Activated CD4-positive, alpha-beta T cell treated with anti-CD3 and anti-CD28 coated beads for 36 hours (primary cell): ENCODE measurements at regions of chr7 and their contacts with region 1.

Region 1: DNA sequence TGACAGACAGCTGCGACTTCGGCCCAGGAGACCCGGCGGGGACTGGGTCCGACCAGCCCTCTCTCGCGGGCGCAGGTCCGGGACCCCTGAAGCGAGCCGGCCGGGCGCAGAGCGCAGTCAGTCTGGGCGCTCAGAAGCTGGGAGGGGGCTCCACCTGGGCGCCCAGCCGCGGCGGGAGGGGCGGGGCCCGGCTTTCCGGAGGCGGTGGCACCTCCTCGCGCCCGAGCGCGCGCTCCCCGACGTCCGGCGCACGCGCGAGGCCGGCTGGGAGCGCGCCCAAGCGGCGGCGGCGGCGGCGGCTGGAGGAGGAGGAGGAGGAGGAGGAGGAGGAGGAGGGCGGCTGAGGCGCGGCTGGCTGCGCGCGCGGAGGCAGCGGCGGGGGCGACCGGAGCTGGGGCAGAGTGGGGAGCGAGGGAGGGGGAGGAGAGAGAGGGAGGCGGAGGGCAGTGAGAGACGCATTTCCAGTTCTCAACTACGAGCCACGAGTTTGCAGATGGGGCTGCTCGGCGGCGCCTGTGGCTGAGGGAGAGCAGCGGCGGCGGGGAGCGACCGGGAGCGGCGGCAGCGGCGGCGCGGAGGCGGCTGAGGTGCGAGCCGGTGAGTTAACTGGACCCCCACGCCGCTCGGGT is at the start of gene PALS2:
- DNase-seq: peak; percentile 86
- ATAC-seq: peak; percentile 68
- H3K4me3 Mint-ChIP-seq: peak within 1 kb of the TSS; percentile 88
- H3K27ac Mint-ChIP-seq: peak within 1 kb of the TSS; percentile 86
- H3K4me1 Mint-ChIP-seq: peaks cover 34% of the 10 kb centered on the region
- H3K27me3 Mint-ChIP-seq: peaks cover 12% of the 10 kb centered on the region
- total RNA-seq, gene PALS2: 20.8 to 41.7 TPM

Region 2: GRCh38 chr7:23679898-23680413 is 893.2 kb before region 1 on chr7 and contains the start of gene FAM221A:
- CTCF ChIA-PET with region 1: no interaction called
- POLR2A ChIA-PET with region 1: no interaction called
- intact Hi-C with region 1: loop called in 1 of 2 experiments (anchors 10 kb)
- DNase-seq: peak; percentile 93
- ATAC-seq: peak; percentile 98
- H3K4me3 Mint-ChIP-seq: peak within 1 kb of the TSS; percentile 85
- H3K27ac Mint-ChIP-seq: peak within 1 kb of the TSS; percentile 76
- H3K4me1 Mint-ChIP-seq: peaks cover 8% of the 10 kb centered on the region
- H3K27me3 Mint-ChIP-seq: no peaks in the 10 kb centered on the region
- total RNA-seq, gene FAM221A: 5.3 to 8.1 TPM

Region 3: GRCh38 chr7:24336461-24336860 is 236.7 kb before region 1 on chr7:
- CTCF ChIA-PET with region 1: no interaction called
- POLR2A ChIA-PET with region 1: no interaction called
- intact Hi-C with region 1: no loop called
- DNase-seq: peak; percentile 64
- ATAC-seq: peak; percentile 81
- H3K4me3 Mint-ChIP-seq: no peak overlapping the region
- H3K27ac Mint-ChIP-seq: no peak overlapping the region
- H3K4me1 Mint-ChIP-seq: peaks cover 7% of the 10 kb centered on the region
- H3K27me3 Mint-ChIP-seq: peaks cover 22% of the 10 kb centered on the region

Region 4: GRCh38 chr7:24757353-24758275 is 184.5 kb after region 1 on chr7 and contains the start of gene GSDME:
- CTCF ChIA-PET with region 1: no interaction called
- POLR2A ChIA-PET with region 1: no interaction called
- intact Hi-C with region 1: loop called (anchors 1 to 10 kb)
- DNase-seq: peak; percentile 62
- ATAC-seq: peak; percentile 52
- H3K4me3 Mint-ChIP-seq: peak within 1 kb of the TSS; percentile 78
- H3K27ac Mint-ChIP-seq: peak within 1 kb of the TSS; percentile 85
- H3K4me1 Mint-ChIP-seq: peaks cover 33% of the 10 kb centered on the region
- H3K27me3 Mint-ChIP-seq: peaks cover 39% of the 10 kb centered on the region
- total RNA-seq, gene GSDME: 6.2 to 8.5 TPM

Region 5: DNA sequence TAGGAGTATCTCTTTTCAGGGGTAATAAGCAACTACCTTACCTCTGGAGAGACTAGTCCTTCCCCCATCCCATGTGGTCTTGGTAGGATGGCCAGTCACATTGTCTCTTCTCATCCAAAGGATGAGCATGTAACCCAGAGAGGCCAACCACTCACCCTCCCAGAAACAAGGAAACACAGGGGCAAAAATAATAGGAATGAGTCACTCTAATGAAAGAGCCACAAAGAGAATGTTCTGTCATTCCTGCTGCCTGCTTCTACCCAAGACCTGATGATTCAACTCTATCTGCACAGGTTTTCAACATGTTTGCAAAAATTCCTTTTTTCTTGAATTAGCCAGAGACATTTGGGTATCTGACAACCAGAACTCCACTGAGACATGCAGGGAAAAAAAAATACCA is 1479.6 kb after region 1 on chr7:
- CTCF ChIA-PET with region 1: no interaction called
- POLR2A ChIA-PET with region 1: no interaction called
- intact Hi-C with region 1: no loop called
- DNase-seq: no peak
- ATAC-seq: no peak
- H3K4me3 Mint-ChIP-seq: no peak overlapping the region
- H3K27ac Mint-ChIP-seq: no peak overlapping the region
- H3K4me1 Mint-ChIP-seq: no peaks in the 10 kb centered on the region
- H3K27me3 Mint-ChIP-seq: peaks cover 24% of the 10 kb centered on the region